Natural killer cell (primary cell): ENCODE measurements at regions of chr10 and their contacts with region 1.

Region 1: GRCh38 chr10:7410862-7411670 is at the start of gene SFMBT2:
- DNase-seq: peak; percentile 64 to 85
- ATAC-seq: peak; percentile 57 to 66 (median 65)
- H3K4me3 ChIP-seq: peak within 1 kb of the TSS; percentile 87
- H3K4me3 Mint-ChIP-seq: peak within 1 kb of the TSS; percentile 98
- H3K27ac ChIP-seq: no peak within 1 kb of the TSS
- H3K27ac Mint-ChIP-seq: peak within 1 kb of the TSS; percentile 87 to 95
- H3K4me1 ChIP-seq: peaks cover 48% of the 10 kb centered on the region
- H3K4me1 Mint-ChIP-seq: peaks cover 41 to 57% of the 10 kb centered on the region in 2 donors
- H3K27me3 ChIP-seq: peaks cover 13% of the 10 kb centered on the region
- H3K27me3 Mint-ChIP-seq: peaks cover 0 to 14% of the 10 kb centered on the region in 2 donors
- CTCF ChIP-seq: no peak
- total RNA-seq, gene SFMBT2: 50.4 to 70.4 (median 52.2) TPM

Region 2: GRCh38 chr10:6416892-6417512 is 994.1 kb before region 1 on chr10:
- intact Hi-C with region 1: loop called (anchors 10 kb)
- DNase-seq: peak in 1 of 2 donors; percentile 79
- ATAC-seq: peak; percentile 56 to 80 (median 72)
- H3K4me3 ChIP-seq: no peak overlapping the region
- H3K4me3 Mint-ChIP-seq: no peak overlapping the region
- H3K27ac ChIP-seq: no peak overlapping the region
- H3K27ac Mint-ChIP-seq: no peak overlapping the region
- H3K4me1 ChIP-seq: no peaks in the 10 kb centered on the region
- H3K4me1 Mint-ChIP-seq: no peaks in the 10 kb centered on the region
- H3K27me3 ChIP-seq: no peaks in the 10 kb centered on the region
- H3K27me3 Mint-ChIP-seq: no peaks in the 10 kb centered on the region
- CTCF ChIP-seq: peak; percentile 69

Region 3: GRCh38 chr10:6920072-6921019 is 490.7 kb before region 1 on chr10:
- intact Hi-C with region 1: loop called (anchors 2 kb)
- DNase-seq: peak; percentile 64 to 88
- ATAC-seq: peak; percentile 95 to 100 (median 98)
- H3K4me3 ChIP-seq: no peak overlapping the region
- H3K4me3 Mint-ChIP-seq: peak overlapping the region; percentile 75
- H3K27ac ChIP-seq: no peak overlapping the region
- H3K27ac Mint-ChIP-seq: peak overlapping the region; percentile 29 to 50
- H3K4me1 ChIP-seq: peaks cover 14% of the 10 kb centered on the region
- H3K4me1 Mint-ChIP-seq: peaks cover 30 to 31% of the 10 kb centered on the region in 2 donors
- H3K27me3 ChIP-seq: no peaks in the 10 kb centered on the region
- H3K27me3 Mint-ChIP-seq: no peaks in the 10 kb centered on the region
- CTCF ChIP-seq: peak; percentile 82

Region 4: GRCh38 chr10:7035126-7035761 is 375.8 kb before region 1 on chr10:
- intact Hi-C with region 1: loop called (anchors 10 kb)
- DNase-seq: peak; percentile 32 to 34
- ATAC-seq: peak; percentile 51 to 60 (median 53)
- H3K4me3 ChIP-seq: no peak overlapping the region
- H3K4me3 Mint-ChIP-seq: peak overlapping the region; percentile 84
- H3K27ac ChIP-seq: peak overlapping the region; percentile 50
- H3K27ac Mint-ChIP-seq: peak overlapping the region; percentile 93
- H3K4me1 ChIP-seq: peaks cover 38% of the 10 kb centered on the region
- H3K4me1 Mint-ChIP-seq: peaks cover 93 to 94% of the 10 kb centered on the region in 2 donors
- H3K27me3 ChIP-seq: no peaks in the 10 kb centered on the region
- H3K27me3 Mint-ChIP-seq: no peaks in the 10 kb centered on the region
- CTCF ChIP-seq: no peak

Region 5: GRCh38 chr10:7121154-7121810 is 289.8 kb before region 1 on chr10:
- intact Hi-C with region 1: loop called (anchors 2 kb)
- DNase-seq: peak; percentile 63 to 88
- ATAC-seq: peak; percentile 89 to 96 (median 91)
- H3K4me3 ChIP-seq: no peak overlapping the region
- H3K4me3 Mint-ChIP-seq: peak overlapping the region; percentile 18
- H3K27ac ChIP-seq: no peak overlapping the region
- H3K27ac Mint-ChIP-seq: peak overlapping the region; percentile 66 to 71
- H3K4me1 ChIP-seq: peaks cover 8% of the 10 kb centered on the region
- H3K4me1 Mint-ChIP-seq: peaks cover 7 to 8% of the 10 kb centered on the region in 2 donors
- H3K27me3 ChIP-seq: no peaks in the 10 kb centered on the region
- H3K27me3 Mint-ChIP-seq: no peaks in the 10 kb centered on the region
- CTCF ChIP-seq: peak; percentile 68

Region 6: DNA sequence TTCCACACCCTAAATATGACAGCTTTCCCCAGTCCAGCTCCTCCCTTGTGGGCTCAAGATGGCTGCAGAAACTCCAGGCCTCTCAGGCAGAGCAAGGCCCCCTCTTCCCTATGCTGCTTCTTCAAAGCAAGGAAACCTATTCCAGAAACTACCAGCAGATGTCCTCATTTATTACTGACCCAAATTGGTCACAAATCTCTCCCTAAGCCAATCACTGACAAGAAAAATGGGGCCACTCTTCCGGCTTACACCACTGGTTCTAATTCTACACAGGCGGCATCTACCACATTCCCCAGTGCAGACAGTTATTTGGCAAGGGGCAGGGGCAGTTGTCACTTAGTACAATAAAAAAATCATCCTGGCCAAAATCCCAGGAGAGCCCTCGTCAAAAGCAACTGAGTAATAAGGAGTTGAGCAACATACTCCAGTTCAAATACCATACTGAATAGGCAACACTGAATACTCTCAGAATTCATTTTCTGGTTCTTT is 150.6 kb before region 1 on chr10:
- intact Hi-C with region 1: loop called (anchors 5 kb)
- DNase-seq: peak in 1 of 2 donors; percentile 72
- ATAC-seq: peak; percentile 54 to 73 (median 70)
- H3K4me3 ChIP-seq: no peak overlapping the region
- H3K4me3 Mint-ChIP-seq: peak overlapping the region; percentile 79
- H3K27ac ChIP-seq: no peak overlapping the region
- H3K27ac Mint-ChIP-seq: peak overlapping the region; percentile 86 to 91
- H3K4me1 ChIP-seq: peaks cover 44% of the 10 kb centered on the region
- H3K4me1 Mint-ChIP-seq: peaks cover 55 to 58% of the 10 kb centered on the region in 2 donors
- H3K27me3 ChIP-seq: no peaks in the 10 kb centered on the region
- H3K27me3 Mint-ChIP-seq: no peaks in the 10 kb centered on the region
- CTCF ChIP-seq: peak; percentile 54

Region 7: GRCh38 chr10:8306685-8307364 is 895.8 kb after region 1 on chr10:
- intact Hi-C with region 1: no loop called
- DNase-seq: no peak
- ATAC-seq: no peak
- H3K4me3 ChIP-seq: no peak overlapping the region
- H3K4me3 Mint-ChIP-seq: no peak overlapping the region
- H3K27ac ChIP-seq: no peak overlapping the region
- H3K27ac Mint-ChIP-seq: no peak overlapping the region
- H3K4me1 ChIP-seq: no peaks in the 10 kb centered on the region
- H3K4me1 Mint-ChIP-seq: no peaks in the 10 kb centered on the region
- H3K27me3 ChIP-seq: no peaks in the 10 kb centered on the region
- H3K27me3 Mint-ChIP-seq: peaks cover 17 to 23% of the 10 kb centered on the region in 2 donors
- CTCF ChIP-seq: no peak